PC-9 (cell line): ENCODE measurements at regions of chr1 and their contacts with region 1.

Region 1: DNA sequence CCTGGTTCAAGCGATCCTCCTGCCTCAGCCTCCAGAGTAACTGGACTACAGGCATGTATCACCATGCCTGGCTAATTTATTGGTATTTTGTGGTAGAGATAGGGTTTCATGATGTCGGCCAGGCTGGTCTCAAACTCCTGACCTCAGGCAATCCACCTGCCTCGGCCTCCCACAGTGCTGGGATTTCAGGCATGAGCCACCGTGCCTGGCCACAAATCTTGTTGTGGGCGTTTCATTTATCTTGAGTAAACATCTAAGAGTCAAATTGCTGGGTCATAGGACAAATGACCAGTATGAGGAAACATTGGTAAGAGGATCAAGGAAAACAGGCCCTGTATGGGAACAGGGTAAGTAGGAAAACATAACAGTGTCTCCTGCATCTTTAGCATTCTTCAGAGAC is 17.9 kb downstream of the TMEM200B start:
- DNase-seq: peak; percentile 68 to 92
- H3K4me3 ChIP-seq: no peak overlapping the region
- H3K27ac ChIP-seq: peak overlapping the region; percentile 65
- H3K4me1 ChIP-seq: peaks cover 12% of the 10 kb centered on the region
- H3K27me3 ChIP-seq: no peaks in the 10 kb centered on the region
- CTCF ChIP-seq: no peak

Region 2: DNA sequence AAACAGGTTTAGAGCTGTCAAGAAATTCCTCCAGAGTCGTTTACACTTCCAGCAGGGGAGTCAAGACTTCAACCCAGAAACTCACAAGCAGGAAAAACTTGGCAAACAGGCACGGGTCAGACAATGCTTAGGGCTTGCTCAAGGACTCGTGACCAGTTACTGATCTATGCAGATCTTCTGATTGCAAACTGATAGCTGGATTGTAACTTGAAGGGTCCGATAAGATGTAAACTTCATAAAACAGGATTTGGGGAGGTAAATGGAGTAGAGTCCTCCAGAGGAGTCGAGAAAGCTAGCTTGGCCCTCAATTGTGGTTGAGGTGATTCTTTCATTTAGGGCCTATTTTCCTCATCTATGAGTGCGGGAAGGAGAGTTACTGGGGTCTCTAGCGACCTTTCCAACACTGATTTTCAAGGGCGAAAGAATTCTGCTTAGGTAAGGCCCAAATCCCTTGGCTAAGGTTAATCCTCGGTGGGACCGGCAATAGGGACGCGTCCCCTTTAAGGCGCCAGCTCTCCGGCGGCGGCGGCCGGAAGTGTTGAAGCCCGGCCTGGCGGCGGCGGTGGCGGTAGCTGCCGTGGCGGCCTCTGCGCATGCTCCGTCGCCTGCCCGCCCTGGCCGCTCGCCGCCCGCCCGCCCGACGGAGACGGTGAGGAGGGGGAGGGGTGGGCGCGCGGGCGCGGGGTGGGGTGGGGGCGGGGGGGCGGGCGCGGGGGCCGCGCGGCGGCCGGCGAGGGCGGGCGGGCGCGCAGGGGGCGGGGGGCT is 437.5 kb before region 1 on chr1 and contains the start of gene GMEB1:
- CTCF ChIA-PET with region 1: no interaction called
- POLR2A ChIA-PET with region 1: interaction called, 26 read pairs
- intact Hi-C with region 1: no loop called
- DNase-seq: peak; percentile 69 to 85
- H3K4me3 ChIP-seq: peak within 1 kb of the TSS; percentile 80
- H3K27ac ChIP-seq: peak within 1 kb of the TSS; percentile 75
- H3K4me1 ChIP-seq: no peaks in the 10 kb centered on the region
- H3K27me3 ChIP-seq: no peaks in the 10 kb centered on the region
- CTCF ChIP-seq: no peak
- total RNA-seq, gene GMEB1: 8.9 and 9.7 TPM in 2 replicates

Region 3: DNA sequence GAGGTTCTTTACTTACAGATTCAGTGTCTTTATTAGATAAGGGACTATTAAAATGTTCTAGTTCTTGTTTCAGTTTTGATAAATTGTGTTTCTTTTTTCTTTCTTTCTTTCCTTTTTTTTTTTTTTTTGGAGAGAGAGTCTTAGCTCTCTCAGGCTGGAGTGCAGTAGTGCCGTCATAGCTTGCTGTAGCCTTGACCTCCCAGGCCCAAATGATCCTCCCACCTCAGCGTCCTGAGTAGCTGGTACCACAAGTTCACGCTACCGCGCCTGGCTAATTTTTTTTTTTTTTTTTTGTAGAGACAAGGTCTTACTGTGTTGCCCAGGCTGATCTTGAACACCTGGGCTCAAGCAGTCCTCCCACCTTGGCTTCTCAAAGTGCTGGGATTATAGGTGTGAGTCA is 58.7 kb before region 1 on chr1:
- CTCF ChIA-PET with region 1: no interaction called
- POLR2A ChIA-PET with region 1: interaction called, 20 read pairs
- intact Hi-C with region 1: no loop called
- DNase-seq: no peak
- H3K4me3 ChIP-seq: no peak overlapping the region
- H3K27ac ChIP-seq: no peak overlapping the region
- H3K4me1 ChIP-seq: no peaks in the 10 kb centered on the region
- H3K27me3 ChIP-seq: no peaks in the 10 kb centered on the region
- CTCF ChIP-seq: no peak

Region 4: DNA sequence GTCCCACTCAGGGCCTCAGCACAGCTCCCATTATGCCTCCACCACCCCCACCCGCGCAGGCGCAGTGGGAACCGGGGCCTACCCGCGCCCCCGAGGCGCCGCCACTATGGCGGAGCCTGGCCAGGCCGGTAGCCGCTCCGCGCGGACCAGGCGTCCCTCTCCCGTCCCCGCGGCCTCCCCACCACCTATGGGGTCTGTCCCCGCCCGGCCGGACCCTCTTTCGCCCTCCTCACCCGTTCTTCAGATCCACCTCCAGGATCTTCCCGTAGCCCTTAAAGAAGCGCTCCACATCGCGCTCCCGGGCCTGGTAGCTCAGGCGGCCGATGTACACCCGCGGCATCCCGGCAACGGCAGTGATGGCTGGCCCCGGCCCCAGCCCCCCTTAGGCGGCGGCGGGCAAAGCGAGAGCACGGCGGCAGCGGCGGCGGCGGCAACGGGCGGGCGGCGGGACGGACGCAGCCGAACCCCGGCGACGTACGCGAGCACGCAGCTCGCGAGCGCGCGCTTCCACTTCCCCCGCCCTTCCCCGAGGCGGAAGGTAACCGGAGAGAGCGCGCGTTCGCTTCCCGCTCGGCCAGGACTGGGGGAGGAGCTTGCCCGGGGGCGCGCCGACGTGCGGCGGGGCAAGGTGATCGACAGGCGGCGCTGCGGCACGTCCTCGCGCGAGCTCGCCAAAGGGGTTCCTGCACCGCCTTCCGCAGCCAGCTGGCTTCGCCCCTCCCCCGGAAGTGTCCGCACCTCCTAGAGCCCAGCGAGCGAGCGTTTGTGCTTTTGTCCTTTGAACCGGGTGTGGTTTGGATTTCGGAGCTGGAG is 75.8 kb after region 1 on chr1 and contains the start of gene SRSF4:
- CTCF ChIA-PET with region 1: no interaction called
- POLR2A ChIA-PET with region 1: no interaction called
- intact Hi-C with region 1: no loop called
- DNase-seq: peak; percentile 86 to 99
- H3K4me3 ChIP-seq: peak within 1 kb of the TSS; percentile 92
- H3K27ac ChIP-seq: peak within 1 kb of the TSS; percentile 88
- H3K4me1 ChIP-seq: peaks cover 33% of the 10 kb centered on the region
- H3K27me3 ChIP-seq: no peaks in the 10 kb centered on the region
- CTCF ChIP-seq: peak; percentile 60
- total RNA-seq, gene SRSF4: 75.7 and 87.6 TPM in 2 replicates